A673 (cell line): ENCODE measurements at regions of chr18 and their contacts with region 1.

Region 1: DNA sequence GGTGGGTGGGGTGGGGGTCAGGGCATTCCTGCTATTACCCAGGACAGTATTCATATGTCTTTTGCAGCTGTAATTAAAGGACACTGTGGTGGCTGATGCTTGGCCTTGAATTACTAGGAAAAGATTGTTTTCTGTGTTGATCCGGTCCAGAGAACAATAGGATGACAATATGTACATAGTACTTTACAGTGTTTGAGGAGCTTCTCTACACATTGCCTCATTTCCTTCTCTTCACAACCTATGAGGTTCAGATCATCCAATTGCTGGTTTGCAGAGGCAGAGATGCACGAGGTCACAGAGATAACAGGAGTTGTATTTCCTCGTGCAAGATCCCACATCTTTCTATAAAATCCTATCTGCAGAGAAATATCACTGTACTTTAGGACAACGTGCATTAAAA is 119.5 kb downstream of the LIPG start:
- DNase-seq: no peak
- H3K4me3 ChIP-seq: no peak overlapping the region
- H3K27ac ChIP-seq: no peak overlapping the region
- H3K4me1 ChIP-seq: no peaks in the 10 kb centered on the region
- H3K27me3 ChIP-seq: no peaks in the 10 kb centered on the region
- CTCF ChIP-seq: no peak

Region 2: GRCh38 chr18:49628881-49629795 is 52.2 kb before region 1 on chr18:
- CTCF ChIA-PET with region 1: no interaction called
- POLR2A ChIA-PET with region 1: no interaction called
- intact Hi-C with region 1: no loop called
- DNase-seq: no peak
- H3K4me3 ChIP-seq: no peak overlapping the region
- H3K27ac ChIP-seq: no peak overlapping the region
- H3K4me1 ChIP-seq: no peaks in the 10 kb centered on the region
- H3K27me3 ChIP-seq: no peaks in the 10 kb centered on the region
- CTCF ChIP-seq: peak; percentile 37; the same call in 1 of the 2 replicates

Region 3: GRCh38 chr18:49645841-49646351 is 35.5 kb before region 1 on chr18:
- CTCF ChIA-PET with region 1: no interaction called
- POLR2A ChIA-PET with region 1: no interaction called
- intact Hi-C with region 1: no loop called
- DNase-seq: no peak
- H3K4me3 ChIP-seq: no peak overlapping the region
- H3K27ac ChIP-seq: no peak overlapping the region
- H3K4me1 ChIP-seq: no peaks in the 10 kb centered on the region
- H3K27me3 ChIP-seq: no peaks in the 10 kb centered on the region
- CTCF ChIP-seq: no peak

Region 4: GRCh38 chr18:49668574-49669275 is 12.7 kb before region 1 on chr18:
- CTCF ChIA-PET with region 1: no interaction called
- POLR2A ChIA-PET with region 1: interaction called, 11 read pairs
- intact Hi-C with region 1: no loop called
- DNase-seq: peak; percentile 27
- H3K4me3 ChIP-seq: no peak overlapping the region
- H3K27ac ChIP-seq: no peak overlapping the region
- H3K4me1 ChIP-seq: peaks cover 15% of the 10 kb centered on the region
- H3K27me3 ChIP-seq: peaks cover 4% of the 10 kb centered on the region
- CTCF ChIP-seq: no peak